Adrenal gland (tissue), 19 donors: ENCODE measurements at regions of chr17 and their contacts with region 1.

Region 1: DNA sequence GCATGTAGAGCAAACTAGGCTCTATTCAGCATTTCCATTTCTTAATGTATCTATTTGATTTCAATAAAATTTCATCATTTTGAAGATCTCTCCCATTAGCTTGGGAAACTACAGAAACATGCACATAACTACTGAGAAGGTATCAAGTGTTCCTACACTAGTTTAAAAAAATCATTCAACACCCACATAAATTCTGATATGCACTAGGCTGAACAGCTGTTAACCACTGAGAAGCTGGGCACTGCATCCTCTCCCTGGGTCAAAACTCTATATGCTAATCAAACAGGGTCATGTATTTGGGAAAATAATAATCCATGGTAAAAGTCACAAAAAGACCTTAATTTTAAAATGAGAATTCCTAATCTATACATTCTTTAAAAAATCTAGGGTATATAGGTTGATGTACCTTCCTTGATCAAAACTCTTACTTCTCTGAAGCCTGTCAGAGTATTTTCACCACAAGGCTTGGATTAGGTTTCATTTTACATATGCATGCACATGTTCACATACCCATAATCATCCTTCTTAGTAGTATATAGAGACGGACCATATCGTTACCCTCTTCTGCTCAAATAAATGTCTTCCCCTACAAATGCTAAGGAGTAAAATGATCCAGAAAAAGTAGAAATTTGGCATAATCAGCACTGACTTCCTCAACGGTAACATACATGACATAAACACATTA is 57.2 kb downstream of the KANSL1 start:
- DNase-seq: no peak
- H3K4me3 ChIP-seq: no peak overlapping the region
- H3K27ac ChIP-seq: no peak overlapping the region
- H3K4me1 ChIP-seq: peaks cover 28 to 67% of the 10 kb centered on the region in 2 donors
- H3K27me3 ChIP-seq: no peaks in the 10 kb centered on the region
- CTCF ChIP-seq: no peak
- POLR2A ChIP-seq: no peak

Region 2: GRCh38 chr17:46078675-46079074 is 57.3 kb before region 1 on chr17:
- intact Hi-C with region 1: no loop called
- DNase-seq: no peak
- H3K4me3 ChIP-seq: no peak overlapping the region
- H3K27ac ChIP-seq: no peak overlapping the region
- H3K4me1 ChIP-seq: peaks cover 4 to 24% of the 10 kb centered on the region in 2 donors
- H3K27me3 ChIP-seq: no peaks in the 10 kb centered on the region
- CTCF ChIP-seq: no peak
- POLR2A ChIP-seq: no peak

Region 3: DNA sequence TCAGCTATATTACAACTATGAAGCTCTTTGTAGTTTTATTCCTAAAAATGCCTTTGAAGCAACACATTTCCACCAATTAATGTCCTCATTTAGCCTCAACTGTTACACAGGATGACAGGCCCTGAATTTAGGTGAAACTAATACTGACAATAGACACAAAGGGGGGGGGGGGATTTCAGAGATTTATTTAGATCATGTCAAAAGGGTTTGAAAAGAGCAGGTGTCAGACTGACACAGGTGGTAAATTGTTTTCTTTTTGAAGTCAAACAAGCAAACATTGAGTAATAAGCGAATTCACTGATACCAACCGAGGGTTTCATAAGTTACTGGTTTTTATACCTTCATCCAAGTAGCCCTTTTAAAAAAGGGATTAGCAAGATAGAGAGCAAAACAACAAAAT is 16.4 kb after region 1 on chr17:
- intact Hi-C with region 1: loop called in 1 of 2 experiments (anchors 2 kb)
- DNase-seq: no peak
- H3K4me3 ChIP-seq: no peak overlapping the region
- H3K27ac ChIP-seq: no peak overlapping the region
- H3K4me1 ChIP-seq: peaks cover 17 to 85% of the 10 kb centered on the region in 2 donors
- H3K27me3 ChIP-seq: no peaks in the 10 kb centered on the region
- CTCF ChIP-seq: no peak
- POLR2A ChIP-seq: no peak